CD4-positive, alpha-beta memory T cell (primary cell): ENCODE measurements at regions of chr20 and their contacts with region 1.

Region 1: GRCh38 chr20:18466894-18467730 is at the starts of genes DZANK1 and POLR3F:
- DNase-seq: peak; percentile 92 to 94 (median 93)
- H3K4me3 ChIP-seq: peak within 1 kb of the TSS; percentile 94 to 99
- H3K4me3 Mint-ChIP-seq: peak within 1 kb of the TSS; percentile 90 to 100 (median 96)
- H3K27ac ChIP-seq: peak within 1 kb of the TSS; percentile 78
- H3K27ac Mint-ChIP-seq: peak within 1 kb of the TSS; percentile 92 to 100 (median 99)
- H3K4me1 ChIP-seq: peaks cover 18% of the 10 kb centered on the region
- H3K4me1 Mint-ChIP-seq: peaks cover 9 to 37% (median 23%) of the 10 kb centered on the region in 4 donors
- H3K27me3 ChIP-seq: no peaks in the 10 kb centered on the region
- H3K27me3 Mint-ChIP-seq: no peaks in the 10 kb centered on the region
- total RNA-seq, gene DZANK1: 2.7 to 3.0 TPM
- total RNA-seq, gene POLR3F: 7.8 to 9.1 TPM

Region 2: DNA sequence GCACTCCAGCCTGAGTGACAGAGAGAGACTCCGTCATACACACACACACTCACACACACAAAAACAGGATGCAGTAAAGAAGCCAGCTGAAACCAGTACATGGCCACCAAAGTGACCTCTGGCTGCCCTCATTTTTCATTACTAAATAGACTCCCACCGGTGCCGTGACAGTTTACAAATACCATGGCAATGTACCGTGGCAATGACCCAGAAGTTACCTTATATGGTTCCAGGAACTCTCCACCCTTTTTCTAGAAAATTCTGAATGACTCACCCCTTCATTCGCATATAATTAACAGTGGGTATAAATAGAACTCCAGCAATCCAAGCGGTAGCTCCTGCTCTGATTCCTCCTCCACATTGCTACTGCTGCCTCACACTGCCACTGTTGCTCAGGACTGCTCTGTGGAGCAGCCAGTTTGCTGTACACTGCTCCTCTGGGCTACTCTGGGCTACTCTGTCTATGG is 556.3 kb before region 1 on chr20:
- CTCF ChIA-PET with region 1: no interaction called
- POLR2A ChIA-PET with region 1: no interaction called
- intact Hi-C with region 1: no loop called
- DNase-seq: no peak
- H3K4me3 ChIP-seq: no peak overlapping the region
- H3K4me3 Mint-ChIP-seq: no peak overlapping the region
- H3K27ac ChIP-seq: no peak overlapping the region
- H3K27ac Mint-ChIP-seq: peak overlapping the region in 1 of 7 donors; percentile 36
- H3K4me1 ChIP-seq: no peaks in the 10 kb centered on the region
- H3K4me1 Mint-ChIP-seq: no peaks in the 10 kb centered on the region
- H3K27me3 ChIP-seq: no peaks in the 10 kb centered on the region
- H3K27me3 Mint-ChIP-seq: peaks cover 15 to 20% of the 10 kb centered on the region in 2 donors

Region 3: DNA sequence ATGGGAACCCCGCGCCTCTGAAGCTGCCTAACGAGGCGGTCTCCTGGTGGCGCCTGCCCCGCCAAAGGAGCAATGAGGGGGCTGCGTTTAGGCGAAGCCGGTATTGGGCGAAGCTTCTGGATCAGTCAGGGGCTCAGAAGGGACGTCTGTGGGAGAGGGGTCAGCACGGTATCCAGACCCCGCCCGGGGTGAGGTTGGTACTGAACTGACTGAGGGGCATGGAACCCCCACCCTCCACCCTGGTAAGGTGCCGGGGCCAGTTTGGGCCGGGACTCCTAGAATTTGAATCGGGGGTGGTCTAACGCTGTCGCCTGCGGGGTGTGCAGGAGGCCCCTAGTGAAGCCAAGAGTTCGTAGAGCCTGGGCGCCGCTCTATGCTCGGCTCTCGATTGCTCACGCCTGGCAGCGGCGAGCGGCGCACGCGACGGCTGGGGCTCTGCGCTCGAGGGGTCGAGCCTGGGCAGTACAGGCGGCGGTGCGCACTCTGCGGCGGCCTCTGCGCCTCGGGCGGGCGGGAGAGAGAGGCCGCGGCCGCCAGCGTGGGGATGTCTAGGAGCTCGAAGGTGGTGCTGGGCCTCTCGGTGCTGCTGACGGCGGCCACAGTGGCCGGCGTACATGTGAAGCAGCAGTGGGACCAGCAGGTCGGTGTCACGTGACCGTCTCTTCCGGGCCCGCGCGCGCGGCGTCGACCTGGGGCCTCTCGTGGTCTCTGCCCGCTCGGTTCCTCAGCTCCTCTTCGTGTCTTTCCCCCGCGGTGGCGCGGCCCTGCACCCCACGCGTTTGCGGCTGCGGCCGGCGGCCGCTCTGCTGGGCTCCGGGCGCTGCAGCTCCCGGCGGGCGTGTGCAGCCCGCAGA is 329.5 kb before region 1 on chr20 and contains the starts of genes KAT14 and PET117:
- CTCF ChIA-PET with region 1: no interaction called
- POLR2A ChIA-PET with region 1: interaction called, 7 read pairs
- intact Hi-C with region 1: loop called (anchors 1 kb)
- DNase-seq: peak; percentile 89 to 95 (median 92)
- H3K4me3 ChIP-seq: peak within 1 kb of the TSS; percentile 71 to 87
- H3K4me3 Mint-ChIP-seq: peak within 1 kb of the TSS; percentile 88 to 94 (median 90)
- H3K27ac ChIP-seq: peak within 1 kb of the TSS; percentile 78
- H3K27ac Mint-ChIP-seq: peak within 1 kb of the TSS; percentile 89 to 96 (median 92)
- H3K4me1 ChIP-seq: peaks cover 34% of the 10 kb centered on the region
- H3K4me1 Mint-ChIP-seq: peaks cover 22 to 43% (median 30%) of the 10 kb centered on the region in 4 donors
- H3K27me3 ChIP-seq: no peaks in the 10 kb centered on the region
- H3K27me3 Mint-ChIP-seq: no peaks in the 10 kb centered on the region
- total RNA-seq, gene KAT14: 22.4 to 24.0 TPM
- total RNA-seq, gene PET117: 14.1 to 15.0 TPM

Region 4: GRCh38 chr20:18477821-18478220 is 10.7 kb after region 1 on chr20:
- CTCF ChIA-PET with region 1: no interaction called
- POLR2A ChIA-PET with region 1: interaction called, 10 read pairs
- intact Hi-C with region 1: no loop called
- DNase-seq: no peak
- H3K4me3 ChIP-seq: no peak overlapping the region
- H3K4me3 Mint-ChIP-seq: no peak overlapping the region
- H3K27ac ChIP-seq: no peak overlapping the region
- H3K27ac Mint-ChIP-seq: peak overlapping the region in 2 of 7 donors; percentile 58 to 64
- H3K4me1 ChIP-seq: no peaks in the 10 kb centered on the region
- H3K4me1 Mint-ChIP-seq: no peaks in the 10 kb centered on the region
- H3K27me3 ChIP-seq: no peaks in the 10 kb centered on the region
- H3K27me3 Mint-ChIP-seq: no peaks in the 10 kb centered on the region

Region 5: GRCh38 chr20:18496740-18497592 is 29.9 kb after region 1 on chr20 and contains the start of gene RBBP9:
- CTCF ChIA-PET with region 1: interaction called, 4 read pairs
- POLR2A ChIA-PET with region 1: interaction called, 46 read pairs
- intact Hi-C with region 1: loop called (anchors 1 kb)
- DNase-seq: peak; percentile 69 to 77 (median 72)
- H3K4me3 ChIP-seq: peak within 1 kb of the TSS; percentile 53 to 71
- H3K4me3 Mint-ChIP-seq: peak within 1 kb of the TSS; percentile 95 to 98 (median 97)
- H3K27ac ChIP-seq: peak within 1 kb of the TSS; percentile 69
- H3K27ac Mint-ChIP-seq: peak within 1 kb of the TSS; percentile 81 to 98 (median 96)
- H3K4me1 ChIP-seq: peaks cover 13% of the 10 kb centered on the region
- H3K4me1 Mint-ChIP-seq: peaks cover 9 to 21% (median 15%) of the 10 kb centered on the region in 4 donors
- H3K27me3 ChIP-seq: no peaks in the 10 kb centered on the region
- H3K27me3 Mint-ChIP-seq: peaks cover 2 to 3% of the 10 kb centered on the region in 2 donors
- total RNA-seq, gene RBBP9: 9.0 to 9.2 TPM

Region 6: DNA sequence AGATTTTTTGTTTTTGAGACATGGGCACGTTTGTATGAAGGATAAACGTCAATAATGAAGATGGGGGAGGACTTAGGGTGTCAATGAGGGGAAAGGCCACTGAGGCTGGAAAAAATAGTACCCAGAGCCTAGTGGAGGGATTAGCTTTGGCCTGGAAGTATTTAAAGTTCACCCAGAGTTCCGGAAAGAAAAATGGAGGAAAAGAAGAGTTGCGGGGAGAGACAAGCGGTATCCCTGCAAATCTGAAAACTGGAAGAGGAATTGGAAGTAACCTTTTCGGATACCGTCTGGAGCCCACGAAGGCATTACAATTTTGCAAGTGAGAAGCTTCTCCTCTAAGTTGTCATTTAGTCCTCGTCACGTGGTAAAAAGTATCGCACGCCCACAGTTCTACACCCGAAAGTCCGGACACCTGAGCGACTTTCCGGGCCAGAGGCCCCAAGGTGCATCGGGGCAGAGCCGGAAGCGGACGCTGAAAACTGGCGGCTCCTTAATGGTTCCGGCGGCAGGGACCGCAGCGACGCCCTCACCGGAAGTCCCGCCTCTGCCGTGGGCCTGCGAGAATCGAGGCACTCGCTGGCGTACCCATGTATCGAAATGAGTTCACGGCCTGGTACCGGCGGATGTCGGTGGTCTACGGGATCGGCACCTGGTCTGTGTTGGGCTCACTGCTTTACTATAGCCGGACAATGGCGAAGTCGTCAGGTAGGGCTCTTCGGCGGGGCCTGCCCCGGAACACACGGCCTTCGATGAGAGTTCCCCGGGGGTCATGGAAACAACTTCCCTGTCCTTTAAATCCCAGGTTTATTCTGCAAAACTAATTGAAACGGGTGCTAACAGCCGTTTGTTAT is 100.0 kb after region 1 on chr20 and contains the start of gene SMIM26:
- CTCF ChIA-PET with region 1: no interaction called
- POLR2A ChIA-PET with region 1: interaction called, 3 read pairs
- intact Hi-C with region 1: loop called (anchors 1 kb)
- DNase-seq: peak; percentile 92 to 94 (median 93)
- H3K4me3 ChIP-seq: peak within 1 kb of the TSS; percentile 77 to 78
- H3K4me3 Mint-ChIP-seq: peak within 1 kb of the TSS; percentile 94 to 99 (median 97)
- H3K27ac ChIP-seq: peak within 1 kb of the TSS; percentile 96
- H3K27ac Mint-ChIP-seq: peak within 1 kb of the TSS; percentile 93 to 100 (median 99)
- H3K4me1 ChIP-seq: peaks cover 13% of the 10 kb centered on the region
- H3K4me1 Mint-ChIP-seq: peaks cover 9 to 34% (median 14%) of the 10 kb centered on the region in 4 donors
- H3K27me3 ChIP-seq: no peaks in the 10 kb centered on the region
- H3K27me3 Mint-ChIP-seq: no peaks in the 10 kb centered on the region
- total RNA-seq, gene SMIM26: 60.2 to 64.2 TPM

Region 7: DNA sequence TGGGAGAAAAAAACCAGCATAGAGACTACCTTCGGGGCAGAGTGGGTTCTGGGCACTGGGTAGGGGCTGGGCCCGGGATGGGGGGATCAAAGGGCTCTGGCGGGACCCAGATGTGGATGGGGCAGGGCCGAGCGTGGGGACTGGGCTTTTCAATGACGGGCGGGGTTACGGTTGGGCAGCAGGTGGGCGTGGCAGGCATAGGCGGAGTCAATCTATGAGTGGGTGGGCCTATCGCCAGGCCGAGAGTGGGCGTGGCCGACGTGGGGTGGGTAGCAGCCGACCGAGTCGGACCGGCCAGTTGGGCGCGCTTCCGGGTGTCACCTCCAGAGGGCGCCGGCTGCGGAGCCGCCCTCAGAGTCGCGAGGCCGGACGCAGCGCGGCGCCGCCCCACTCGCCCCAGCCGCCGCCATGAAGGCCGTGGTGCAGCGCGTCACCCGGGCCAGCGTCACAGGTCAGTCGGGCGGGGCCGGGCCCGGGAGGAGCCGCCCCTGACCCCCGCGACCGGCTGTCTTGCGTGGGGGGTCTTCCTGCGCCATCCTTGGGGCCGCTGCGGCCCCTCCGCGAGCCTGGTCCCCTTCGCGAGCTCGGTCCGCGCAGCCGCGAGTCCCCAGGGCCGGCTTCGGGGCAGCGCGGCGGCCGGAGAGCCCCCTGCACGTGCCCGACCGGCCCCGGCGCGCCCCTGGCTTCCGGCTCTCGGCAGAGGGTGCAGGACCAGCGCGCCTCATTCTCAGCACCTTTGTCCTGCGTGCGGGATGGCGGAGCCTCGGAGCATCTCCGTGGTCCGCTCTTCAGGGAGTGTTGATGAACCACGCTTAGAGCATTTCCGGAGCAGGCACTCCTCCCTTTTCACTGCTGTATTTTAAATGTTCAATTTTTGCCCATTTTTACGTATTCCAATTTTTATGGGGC is 120.8 kb after region 1 on chr20 and contains the start of gene DTD1:
- CTCF ChIA-PET with region 1: no interaction called
- POLR2A ChIA-PET with region 1: interaction called, 5 read pairs
- intact Hi-C with region 1: loop called (anchors 1 kb)
- DNase-seq: peak; percentile 66 to 77 (median 69)
- H3K4me3 ChIP-seq: peak within 1 kb of the TSS; percentile 47 to 80
- H3K4me3 Mint-ChIP-seq: peak within 1 kb of the TSS; percentile 87 to 95 (median 91)
- H3K27ac ChIP-seq: peak within 1 kb of the TSS; percentile 71
- H3K27ac Mint-ChIP-seq: peak within 1 kb of the TSS; percentile 88 to 97 (median 95)
- H3K4me1 ChIP-seq: peaks cover 27% of the 10 kb centered on the region
- H3K4me1 Mint-ChIP-seq: peaks cover 18 to 27% (median 23%) of the 10 kb centered on the region in 4 donors
- H3K27me3 ChIP-seq: no peaks in the 10 kb centered on the region
- H3K27me3 Mint-ChIP-seq: peaks cover 4 to 5% of the 10 kb centered on the region in 2 donors
- total RNA-seq, gene DTD1: 15.9 to 18.1 TPM